Heart right ventricle (tissue), 16 donors: ENCODE measurements at regions of chr16 and their contacts with region 1.

Region 1: DNA sequence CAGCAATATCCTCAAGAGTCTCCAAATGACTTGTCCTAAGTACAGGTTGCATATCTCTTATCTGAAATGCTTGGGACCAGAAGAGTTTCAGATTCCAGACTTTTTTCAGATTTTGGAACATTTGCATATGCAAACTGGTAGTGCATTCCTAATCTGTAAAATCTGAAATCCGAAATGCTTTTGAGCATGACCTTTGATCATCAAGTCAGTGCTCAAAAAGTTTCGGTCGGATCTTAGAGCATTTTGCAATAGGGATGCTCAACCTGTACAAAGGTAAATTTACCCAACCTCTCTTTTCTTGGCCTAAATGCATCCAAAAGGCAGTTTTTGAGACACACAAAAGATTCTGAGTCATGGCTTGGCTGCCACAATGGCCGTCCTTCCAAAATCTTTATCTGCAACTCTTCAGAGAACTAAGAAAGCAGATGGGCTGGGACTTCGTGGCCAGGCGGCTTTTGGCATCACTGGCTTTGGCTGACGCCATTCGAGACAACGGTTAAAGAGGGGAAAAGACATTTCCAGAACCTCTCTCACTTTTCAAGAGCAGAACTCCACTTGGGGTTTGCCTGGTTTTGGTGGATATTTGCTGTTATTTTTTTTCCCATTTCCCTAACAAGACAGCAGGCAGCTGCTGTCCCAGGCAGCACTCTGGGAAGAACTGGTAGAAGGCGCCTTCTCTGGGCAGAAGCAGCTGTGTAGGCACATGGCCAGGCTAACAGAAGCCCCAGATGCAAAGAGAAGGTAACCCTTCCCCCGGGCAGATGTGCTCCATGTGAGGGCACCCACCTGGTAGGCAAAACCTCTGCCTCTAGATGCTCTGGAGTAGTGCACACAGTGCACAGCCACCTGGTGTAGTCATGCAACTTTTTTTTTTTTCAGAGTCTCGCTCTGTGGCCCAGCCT is 8.9 kb downstream of the CPPED1 start:
- DNase-seq: peak; percentile 52 to 57
- ATAC-seq: peak in 7 of 8 donors; percentile 62 to 93 (median 82)
- H3K4me3 ChIP-seq: no peak overlapping the region
- H3K27ac ChIP-seq: peak overlapping the region in 4 of 10 donors; percentile 3 to 64 (median 46)
- H3K4me1 ChIP-seq: peaks cover 0 to 23% (median 4%) of the 10 kb centered on the region in 9 donors
- H3K27me3 ChIP-seq: no peaks in the 10 kb centered on the region
- CTCF ChIP-seq: no peak

Region 2: DNA sequence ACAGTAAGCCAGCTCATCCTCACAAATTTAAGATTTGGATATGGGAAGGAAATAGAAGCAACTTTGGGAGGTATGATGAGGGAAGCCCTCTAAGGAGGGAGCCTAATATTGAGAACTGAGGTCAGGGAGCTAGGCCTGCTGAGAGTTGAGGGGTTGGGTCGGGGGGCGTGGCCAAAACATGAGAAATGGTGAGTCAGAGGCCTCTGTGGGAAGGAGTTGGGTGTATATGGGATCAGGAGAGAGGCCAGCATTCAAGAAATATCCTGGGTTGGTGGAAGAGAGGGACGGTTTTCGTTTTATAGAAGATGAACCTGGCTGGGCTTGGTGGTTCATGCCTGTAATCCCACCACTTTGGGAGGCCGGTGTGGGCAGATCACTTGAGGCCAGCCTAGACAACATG is 1801.9 kb before region 1 on chr16:
- intact Hi-C with region 1: loop called in 1 of 10 experiments (anchors 5 kb)
- DNase-seq: no peak
- ATAC-seq: peak in 4 of 8 donors; percentile 15 to 79 (median 53)
- H3K4me3 ChIP-seq: no peak overlapping the region
- H3K27ac ChIP-seq: no peak overlapping the region
- H3K4me1 ChIP-seq: peaks cover 0 to 24% (median 0%) of the 10 kb centered on the region in 9 donors
- H3K27me3 ChIP-seq: no peaks in the 10 kb centered on the region
- CTCF ChIP-seq: no peak

Region 3: DNA sequence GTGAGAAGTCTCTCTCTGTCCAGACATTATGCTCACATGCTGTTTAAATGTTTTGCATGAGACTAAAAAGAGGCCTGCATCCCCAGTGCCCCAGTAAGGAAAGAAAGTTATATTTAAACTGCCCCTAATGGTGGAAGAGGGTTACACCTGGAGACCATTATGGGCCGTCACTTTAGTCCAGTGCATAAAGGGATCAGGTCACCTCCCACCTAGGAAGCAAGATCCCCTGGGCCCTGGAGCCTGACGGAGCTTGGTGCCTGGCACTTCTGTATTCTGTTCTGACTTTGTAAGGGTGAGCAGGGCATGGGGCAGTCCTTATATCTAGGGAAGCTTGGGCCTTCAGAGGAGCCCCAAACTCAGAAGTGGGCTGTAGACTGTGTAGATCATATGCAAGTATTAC is 58.9 kb before region 1 on chr16:
- intact Hi-C with region 1: loop called in 1 of 10 experiments (anchors 10 kb)
- DNase-seq: no peak
- ATAC-seq: no peak
- H3K4me3 ChIP-seq: no peak overlapping the region
- H3K27ac ChIP-seq: no peak overlapping the region
- H3K4me1 ChIP-seq: no peaks in the 10 kb centered on the region
- H3K27me3 ChIP-seq: no peaks in the 10 kb centered on the region
- CTCF ChIP-seq: no peak

Region 4: GRCh38 chr16:12971241-12971640 is 176.5 kb after region 1 on chr16:
- intact Hi-C with region 1: no loop called
- DNase-seq: peak in 1 of 2 donors; percentile 11
- ATAC-seq: no peak
- H3K4me3 ChIP-seq: no peak overlapping the region
- H3K27ac ChIP-seq: no peak overlapping the region
- H3K4me1 ChIP-seq: no peaks in the 10 kb centered on the region
- H3K27me3 ChIP-seq: peaks cover 0 to 21% (median 3%) of the 10 kb centered on the region in 7 donors
- CTCF ChIP-seq: no peak

Region 5: GRCh38 chr16:13005848-13006247 is 211.1 kb after region 1 on chr16:
- intact Hi-C with region 1: no loop called
- DNase-seq: no peak
- ATAC-seq: no peak
- H3K4me3 ChIP-seq: no peak overlapping the region
- H3K27ac ChIP-seq: no peak overlapping the region
- H3K4me1 ChIP-seq: no peaks in the 10 kb centered on the region
- H3K27me3 ChIP-seq: peaks cover 0 to 16% (median 0%) of the 10 kb centered on the region in 7 donors
- CTCF ChIP-seq: no peak